Activated naive CD4-positive, alpha-beta T cell treated with anti-CD3 and anti-CD28 coated beads for 36 hours (primary cell): ENCODE measurements at regions of chr17 and their contacts with region 1.

Region 1: DNA sequence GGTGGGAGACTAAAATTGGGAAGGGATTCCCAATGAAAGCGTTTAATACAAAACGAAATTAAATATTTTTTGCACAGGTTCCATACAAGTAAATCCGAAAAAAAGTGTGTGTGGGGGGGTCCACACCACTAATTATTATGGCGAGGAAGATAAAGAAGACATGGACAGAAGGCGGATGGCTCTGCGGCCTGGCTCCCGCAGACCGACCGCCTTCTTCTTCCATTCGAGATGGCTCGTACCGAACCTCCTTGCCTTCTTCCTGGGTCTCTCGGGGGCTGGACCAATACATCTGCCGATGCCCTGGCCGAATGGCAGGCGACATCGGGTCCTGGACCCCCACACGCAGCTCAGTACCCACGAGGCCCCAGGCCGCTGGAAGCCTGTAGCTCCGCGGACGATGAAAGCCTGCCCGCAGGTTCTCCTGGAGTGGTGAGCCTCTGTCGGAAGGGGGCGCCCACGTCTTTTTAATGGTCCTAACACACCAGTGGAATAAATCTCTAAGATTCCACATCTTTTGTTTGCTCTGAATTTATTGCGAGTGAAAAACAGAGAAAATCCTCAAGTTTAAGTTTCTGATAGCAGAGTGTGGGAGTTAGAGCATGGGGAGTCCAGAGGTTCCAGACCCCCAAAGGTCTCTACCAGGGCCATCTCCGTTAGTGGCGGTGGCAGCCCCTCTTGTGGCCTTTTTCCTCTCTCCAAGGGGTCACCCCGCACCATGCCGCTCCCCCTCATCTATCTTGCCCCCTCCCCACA is 1.4 kb downstream of the PRAC2 start:
- DNase-seq: peak; percentile 94
- H3K4me3 Mint-ChIP-seq: peak overlapping the region; percentile 57
- H3K27ac Mint-ChIP-seq: no peak overlapping the region
- H3K4me1 Mint-ChIP-seq: peaks cover 43% of the 10 kb centered on the region
- H3K27me3 Mint-ChIP-seq: peaks cover 92% of the 10 kb centered on the region

Region 2: DNA sequence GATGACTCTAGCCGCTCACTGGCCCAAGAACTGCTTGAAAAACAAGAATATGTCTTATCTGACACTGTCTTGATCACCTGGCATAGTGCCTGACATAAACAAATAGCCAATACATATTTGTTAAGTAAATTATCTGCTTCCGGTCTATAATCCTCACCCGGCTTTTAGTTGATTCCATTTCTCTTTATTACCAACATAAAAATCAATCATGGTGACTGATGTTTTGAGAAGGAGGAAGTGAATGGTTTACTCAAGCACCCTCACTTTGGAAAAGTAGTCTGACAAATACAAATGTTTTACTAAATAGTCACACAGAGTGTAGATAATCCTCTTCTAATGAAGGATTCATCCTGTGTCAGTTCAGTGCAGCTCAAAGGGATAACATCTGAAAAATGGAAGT is 341.4 kb before region 1 on chr17:
- CTCF ChIA-PET with region 1: no interaction called
- intact Hi-C with region 1: no loop called
- DNase-seq: no peak
- H3K4me3 Mint-ChIP-seq: no peak overlapping the region
- H3K27ac Mint-ChIP-seq: no peak overlapping the region
- H3K4me1 Mint-ChIP-seq: peaks cover 26% of the 10 kb centered on the region
- H3K27me3 Mint-ChIP-seq: no peaks in the 10 kb centered on the region

Region 3: GRCh38 chr17:48671697-48672171 is 52.7 kb before region 1 on chr17:
- CTCF ChIA-PET with region 1: interaction called, 11 read pairs
- intact Hi-C with region 1: no loop called
- DNase-seq: peak; percentile 79
- H3K4me3 Mint-ChIP-seq: no peak overlapping the region
- H3K27ac Mint-ChIP-seq: no peak overlapping the region
- H3K4me1 Mint-ChIP-seq: no peaks in the 10 kb centered on the region
- H3K27me3 Mint-ChIP-seq: peaks cover 14% of the 10 kb centered on the region

Region 4: DNA sequence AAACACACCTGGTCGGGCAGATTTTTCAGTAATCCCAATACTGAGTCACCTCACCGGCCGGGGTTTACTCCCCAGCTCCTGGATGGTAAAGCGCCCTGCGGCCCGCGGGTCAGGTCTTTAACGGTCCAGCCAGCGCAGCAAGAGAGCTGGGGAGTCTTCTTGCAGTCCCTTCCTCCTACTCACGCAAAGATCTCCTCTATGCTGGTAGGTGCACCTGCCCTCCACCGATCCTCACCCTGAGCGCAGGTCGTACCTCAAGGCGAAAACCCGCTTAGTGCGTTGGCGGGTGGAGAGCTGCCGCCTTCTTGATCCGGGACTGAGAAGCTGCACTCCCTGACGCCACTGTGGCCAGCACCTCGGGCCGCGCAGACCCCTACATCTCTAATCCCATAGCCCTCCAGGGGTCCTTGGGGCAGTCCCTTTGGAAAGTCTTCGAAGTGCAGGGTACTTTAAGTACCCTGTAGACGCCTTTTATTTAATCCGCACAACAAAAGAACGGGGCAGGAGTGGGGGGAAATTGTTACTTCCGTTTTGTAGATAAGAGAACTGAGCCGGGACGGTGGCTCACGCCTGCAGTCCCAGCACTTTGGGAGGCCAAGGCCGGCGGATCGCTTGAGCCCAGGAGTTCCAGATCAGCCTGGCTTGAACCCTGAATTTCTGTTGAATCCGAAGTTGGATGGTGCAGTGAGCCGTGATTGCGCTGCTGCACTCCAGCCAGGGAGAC is 14.5 kb after region 1 on chr17:
- CTCF ChIA-PET with region 1: interaction called, 19 read pairs
- intact Hi-C with region 1: no loop called
- DNase-seq: no peak
- H3K4me3 Mint-ChIP-seq: peak overlapping the region; percentile 41
- H3K27ac Mint-ChIP-seq: no peak overlapping the region
- H3K4me1 Mint-ChIP-seq: peaks cover 13% of the 10 kb centered on the region
- H3K27me3 Mint-ChIP-seq: peaks cover 89% of the 10 kb centered on the region

Region 5: GRCh38 chr17:48753794-48754499 is 29.5 kb after region 1 on chr17:
- CTCF ChIA-PET with region 1: interaction called, 18 read pairs
- intact Hi-C with region 1: loop called (anchors 2 kb)
- DNase-seq: no peak
- H3K4me3 Mint-ChIP-seq: no peak overlapping the region
- H3K27ac Mint-ChIP-seq: no peak overlapping the region
- H3K4me1 Mint-ChIP-seq: peaks cover 9% of the 10 kb centered on the region
- H3K27me3 Mint-ChIP-seq: peaks cover 82% of the 10 kb centered on the region

Region 6: DNA sequence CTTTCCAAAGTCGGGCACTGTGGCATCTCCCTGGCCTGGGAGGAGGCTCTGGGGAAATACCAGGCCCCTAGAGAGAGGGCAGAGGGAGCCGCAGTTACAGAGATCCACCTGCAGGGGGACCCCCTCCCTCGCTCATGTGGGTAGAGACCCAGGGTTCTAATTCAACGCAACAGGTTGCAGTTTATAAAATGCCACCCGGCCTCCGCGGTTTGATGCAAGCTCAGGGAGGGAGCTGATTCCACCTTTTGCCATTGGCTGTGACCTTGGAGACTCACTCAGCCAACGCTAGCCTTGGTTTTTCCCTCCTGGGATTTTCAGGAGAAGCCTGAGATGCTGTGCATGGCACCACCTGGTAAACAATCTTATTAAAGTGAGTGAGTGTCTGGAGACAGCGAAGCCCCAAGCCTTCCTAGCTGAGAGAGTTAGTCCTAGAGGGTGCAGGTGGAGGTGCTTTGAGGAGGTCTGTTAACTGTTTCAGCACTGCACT is 80.5 kb after region 1 on chr17:
- CTCF ChIA-PET with region 1: interaction called, 16 read pairs
- intact Hi-C with region 1: no loop called
- DNase-seq: peak; percentile 78
- H3K4me3 Mint-ChIP-seq: no peak overlapping the region
- H3K27ac Mint-ChIP-seq: no peak overlapping the region
- H3K4me1 Mint-ChIP-seq: no peaks in the 10 kb centered on the region
- H3K27me3 Mint-ChIP-seq: peaks cover 5% of the 10 kb centered on the region

Region 7: GRCh38 chr17:49031965-49032928 is 307.8 kb after region 1 on chr17:
- CTCF ChIA-PET with region 1: no interaction called
- intact Hi-C with region 1: loop called (anchors 1 kb)
- DNase-seq: peak; percentile 65
- H3K4me3 Mint-ChIP-seq: no peak overlapping the region
- H3K27ac Mint-ChIP-seq: no peak overlapping the region
- H3K4me1 Mint-ChIP-seq: peaks cover 4% of the 10 kb centered on the region
- H3K27me3 Mint-ChIP-seq: peaks cover 4% of the 10 kb centered on the region